ENCODE measurements at regions of chr12 and their contacts with region 1.

Region 1: DNA sequence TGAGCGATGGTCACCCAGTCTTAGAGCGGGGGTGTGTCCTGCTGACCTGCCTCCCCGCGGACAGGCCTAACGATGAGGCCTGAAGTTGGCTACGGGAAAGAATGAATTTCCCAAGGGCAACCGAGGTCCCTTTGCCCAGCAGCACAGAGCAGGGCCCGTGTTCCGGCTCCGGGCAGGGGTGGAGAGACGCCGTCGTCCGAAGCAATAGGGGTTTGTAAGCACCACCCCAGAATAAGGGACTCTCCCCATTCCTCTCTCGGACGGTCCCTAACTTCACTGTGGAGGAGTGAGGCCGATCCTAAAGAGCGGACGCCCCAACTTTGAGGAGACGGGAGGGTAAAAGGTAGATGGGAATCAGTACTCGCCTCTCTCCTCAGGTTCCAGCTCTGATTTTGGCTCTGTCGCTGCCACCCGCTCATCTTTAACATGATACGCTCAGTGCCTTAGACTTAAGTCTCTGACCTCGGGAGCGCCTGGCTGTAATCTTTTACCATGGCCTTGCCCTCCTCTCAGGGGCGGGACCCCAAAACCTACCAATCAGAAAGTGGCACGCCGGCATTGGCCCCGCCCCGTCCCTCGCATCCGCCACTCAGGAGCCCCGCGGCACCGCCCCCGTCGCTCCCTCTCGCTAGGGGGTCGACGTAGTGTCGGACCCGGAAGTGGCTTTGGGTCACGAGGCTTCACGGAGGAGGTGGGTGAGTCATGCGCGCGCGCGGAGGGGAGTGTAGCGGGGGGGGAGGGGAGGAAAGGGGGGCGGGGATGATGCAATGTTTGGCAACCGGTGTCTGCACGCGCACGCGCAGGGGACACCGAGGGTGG is at the start of gene DDIT3:
- DNase-seq: peak; percentile 99
- H3K4me3 ChIP-seq: peak within 1 kb of the TSS; percentile 75 to 99
- H3K4me3 Mint-ChIP-seq: peak within 1 kb of the TSS; percentile 93 to 99 (median 97)
- H3K27ac ChIP-seq: peak within 1 kb of the TSS; percentile 96
- H3K27ac Mint-ChIP-seq: peak within 1 kb of the TSS; percentile 99 to 100 (median 99)
- H3K4me1 ChIP-seq: peaks cover 65% of the 10 kb centered on the region
- H3K4me1 Mint-ChIP-seq: peaks cover 37 to 71% (median 49%) of the 10 kb centered on the region in 4 donors
- H3K27me3 ChIP-seq: no peaks in the 10 kb centered on the region
- H3K27me3 Mint-ChIP-seq: peaks cover 0 to 2% of the 10 kb centered on the region in 2 donors
- total RNA-seq, gene DDIT3: 38.5 to 40.8 TPM

Region 2: GRCh38 chr12:57487597-57488401 is 32.5 kb before region 1 on chr12 and contains the start of gene MARS1:
- CTCF ChIA-PET with region 1: interaction called, 5 read pairs
- POLR2A ChIA-PET with region 1: interaction called, 13 read pairs
- intact Hi-C with region 1: loop called (anchors 1 kb)
- DNase-seq: peak; percentile 90 to 97 (median 94)
- H3K4me3 ChIP-seq: peak within 1 kb of the TSS; percentile 78 to 95
- H3K4me3 Mint-ChIP-seq: peak within 1 kb of the TSS; percentile 95 to 99 (median 98)
- H3K27ac ChIP-seq: peak within 1 kb of the TSS; percentile 84
- H3K27ac Mint-ChIP-seq: peak within 1 kb of the TSS; percentile 90 to 99 (median 98)
- H3K4me1 ChIP-seq: peaks cover 23% of the 10 kb centered on the region
- H3K4me1 Mint-ChIP-seq: peaks cover 22 to 43% (median 28%) of the 10 kb centered on the region in 4 donors
- H3K27me3 ChIP-seq: no peaks in the 10 kb centered on the region
- H3K27me3 Mint-ChIP-seq: no peaks in the 10 kb centered on the region
- total RNA-seq, gene MARS1: 224 to 242 TPM

Region 3: DNA sequence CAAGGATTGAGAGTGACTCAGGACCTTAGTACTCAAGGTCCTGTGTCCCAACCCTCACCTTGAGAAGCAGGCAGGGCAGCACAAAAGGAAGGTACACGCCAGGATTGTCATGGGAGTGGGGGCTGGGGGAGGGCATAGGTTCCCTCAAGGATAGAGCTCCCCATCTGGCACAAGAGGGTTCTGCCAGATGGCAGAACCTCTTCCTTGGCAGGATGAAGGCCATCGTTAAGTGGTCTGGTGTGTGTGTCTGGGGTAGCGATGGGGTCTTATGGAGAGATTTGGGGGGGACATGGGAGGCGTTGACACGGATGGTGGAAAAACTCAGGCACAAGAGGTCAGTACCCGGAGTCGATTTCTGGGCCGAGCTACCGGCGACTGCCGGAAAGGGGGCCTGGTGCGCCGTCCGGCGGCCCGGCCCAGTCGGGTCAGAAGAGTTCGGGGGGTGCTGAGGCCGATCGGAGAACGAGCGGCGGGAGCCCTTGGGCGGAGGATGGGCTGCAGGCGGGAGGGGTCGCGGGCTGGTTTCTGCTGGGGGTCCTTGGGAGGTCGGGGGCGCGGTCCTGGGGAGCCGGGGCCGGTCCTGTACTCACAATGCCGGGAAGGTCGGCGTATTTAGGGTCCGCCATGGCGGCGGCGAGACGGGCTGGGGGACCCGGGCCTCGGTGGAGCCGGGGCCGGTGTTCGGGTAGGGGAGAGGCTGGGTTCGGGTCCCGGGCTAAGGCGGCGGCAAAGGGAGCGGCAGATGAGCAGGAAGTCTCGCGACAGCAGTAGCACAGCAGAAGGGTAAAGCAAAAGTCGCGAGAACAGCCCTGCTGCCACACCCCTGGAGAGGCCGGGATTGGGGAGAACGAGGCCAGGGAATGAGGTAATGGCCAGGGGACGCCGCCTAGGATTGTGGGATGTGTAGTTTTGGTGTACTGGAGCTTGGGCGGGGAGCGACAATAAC is 26.4 kb after region 1 on chr12 and contains the start of gene DCTN2:
- CTCF ChIA-PET with region 1: interaction called, 3 read pairs
- POLR2A ChIA-PET with region 1: interaction called, 20 read pairs
- intact Hi-C with region 1: loop called (anchors 1 kb)
- DNase-seq: peak; percentile 91 to 97 (median 93)
- H3K4me3 ChIP-seq: peak within 1 kb of the TSS; percentile 54 to 71
- H3K4me3 Mint-ChIP-seq: peak within 1 kb of the TSS; percentile 93 to 100 (median 98)
- H3K27ac ChIP-seq: peak within 1 kb of the TSS; percentile 84
- H3K27ac Mint-ChIP-seq: peak within 1 kb of the TSS; percentile 84 to 99 (median 97)
- H3K4me1 ChIP-seq: peaks cover 37% of the 10 kb centered on the region
- H3K4me1 Mint-ChIP-seq: peaks cover 32 to 53% (median 42%) of the 10 kb centered on the region in 4 donors
- H3K27me3 ChIP-seq: no peaks in the 10 kb centered on the region
- H3K27me3 Mint-ChIP-seq: peaks cover 2 to 4% of the 10 kb centered on the region in 2 donors
- total RNA-seq, gene DCTN2: 69.4 to 70.7 TPM

Region 4: DNA sequence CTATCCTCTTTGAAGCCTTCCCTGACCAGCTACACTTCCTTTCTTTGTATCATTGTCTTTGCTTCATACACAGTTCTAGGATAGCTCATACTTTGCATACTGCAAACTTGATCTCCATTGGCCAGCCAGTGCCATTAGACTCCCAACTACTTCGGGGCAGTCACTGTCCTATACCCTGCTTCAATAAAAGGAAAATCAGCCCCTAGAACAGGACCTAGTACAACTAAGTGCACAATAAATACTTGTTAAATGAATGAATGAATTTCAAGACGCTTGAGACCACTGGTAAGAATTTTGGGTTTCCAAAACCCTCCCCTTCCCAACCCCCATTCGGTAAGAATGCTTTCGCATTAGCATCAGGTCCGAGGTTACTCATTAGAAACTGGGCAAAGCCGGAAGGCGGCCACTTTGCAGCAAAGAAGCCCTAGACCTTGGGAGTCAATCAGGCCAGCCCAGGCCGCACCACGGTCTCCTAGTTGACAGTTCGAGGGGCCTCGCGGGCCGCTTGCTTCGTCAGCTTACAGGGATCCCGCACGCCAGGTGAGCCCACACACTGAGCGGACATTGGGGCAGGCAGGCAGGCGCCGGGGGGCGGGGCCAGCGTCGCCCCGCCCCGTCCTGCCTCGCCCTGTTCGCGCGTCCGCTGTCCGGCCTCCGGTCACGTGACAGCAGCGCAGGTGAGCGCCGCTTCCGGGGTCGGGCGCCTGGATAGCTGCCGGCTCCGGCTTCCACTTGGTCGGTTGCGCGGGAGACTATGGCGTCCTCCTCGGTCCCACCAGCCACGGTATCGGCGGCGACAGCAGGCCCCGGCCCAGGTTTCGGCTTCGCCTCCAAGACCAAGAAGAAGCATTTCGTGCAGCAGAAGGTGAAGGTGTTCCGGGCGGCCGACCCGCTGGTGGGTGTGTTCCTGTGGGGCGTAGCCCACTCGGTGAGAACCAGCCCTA is 70.5 kb after region 1 on chr12 and contains the start of gene PIP4K2C:
- CTCF ChIA-PET with region 1: no interaction called
- POLR2A ChIA-PET with region 1: interaction called, 4 read pairs
- intact Hi-C with region 1: loop called (anchors 1 kb)
- DNase-seq: peak; percentile 73 to 83 (median 75)
- H3K4me3 ChIP-seq: peak within 1 kb of the TSS; percentile 54 to 87
- H3K4me3 Mint-ChIP-seq: peak within 1 kb of the TSS; percentile 86 to 92 (median 90)
- H3K27ac ChIP-seq: peak within 1 kb of the TSS; percentile 63
- H3K27ac Mint-ChIP-seq: peak within 1 kb of the TSS; percentile 73 to 96 (median 91)
- H3K4me1 ChIP-seq: peaks cover 27% of the 10 kb centered on the region
- H3K4me1 Mint-ChIP-seq: peaks cover 23 to 39% (median 30%) of the 10 kb centered on the region in 4 donors
- H3K27me3 ChIP-seq: no peaks in the 10 kb centered on the region
- H3K27me3 Mint-ChIP-seq: no peaks in the 10 kb centered on the region
- total RNA-seq, gene PIP4K2C: 32.4 to 36.0 TPM

Region 5: DNA sequence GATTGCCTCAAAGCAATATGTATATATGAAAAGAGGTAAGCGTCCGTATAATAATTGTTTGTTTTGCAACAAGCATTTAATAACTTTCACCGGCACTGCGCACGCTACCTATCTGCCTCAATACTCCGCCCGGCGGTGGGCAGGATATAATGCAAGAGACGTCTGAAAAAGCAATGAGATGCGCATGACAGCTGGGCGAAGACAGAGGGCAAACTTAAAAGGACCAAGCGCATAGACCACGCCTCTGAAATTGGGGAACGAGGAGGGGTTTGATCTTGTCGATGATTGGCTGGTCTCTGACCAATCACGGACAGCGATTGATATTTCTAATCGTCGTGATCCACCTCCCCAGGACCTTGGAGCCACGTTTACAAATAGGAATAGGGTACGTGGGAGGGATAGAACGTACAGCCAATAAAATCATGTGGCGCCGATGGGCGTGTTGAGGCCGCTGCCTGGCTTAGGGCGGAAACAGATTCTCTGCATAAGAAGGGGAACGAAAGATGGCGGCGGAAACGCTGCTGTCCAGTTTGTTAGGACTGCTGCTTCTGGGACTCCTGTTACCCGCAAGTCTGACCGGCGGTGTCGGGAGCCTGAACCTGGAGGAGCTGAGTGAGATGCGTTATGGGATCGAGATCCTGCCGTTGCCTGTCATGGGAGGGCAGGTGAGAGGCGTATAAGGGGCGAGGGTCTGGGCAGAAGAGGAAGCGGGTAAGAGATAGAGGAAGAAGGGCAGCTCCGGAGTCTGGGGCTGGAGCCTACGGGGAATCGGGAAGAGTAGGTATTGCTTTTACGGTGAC is 173.6 kb after region 1 on chr12 and contains the start of gene OS9:
- CTCF ChIA-PET with region 1: no interaction called
- POLR2A ChIA-PET with region 1: no interaction called
- intact Hi-C with region 1: loop called (anchors 2 kb)
- DNase-seq: peak; percentile 93 to 100 (median 99)
- H3K4me3 ChIP-seq: peak within 1 kb of the TSS; percentile 75 to 82
- H3K4me3 Mint-ChIP-seq: no peak within 1 kb of the TSS
- H3K27ac ChIP-seq: peak within 1 kb of the TSS; percentile 79
- H3K27ac Mint-ChIP-seq: no peak within 1 kb of the TSS
- H3K4me1 ChIP-seq: peaks cover 26% of the 10 kb centered on the region
- H3K4me1 Mint-ChIP-seq: peaks cover 0 to 18% (median 5%) of the 10 kb centered on the region in 4 donors
- H3K27me3 ChIP-seq: no peaks in the 10 kb centered on the region
- H3K27me3 Mint-ChIP-seq: peaks cover 4 to 6% of the 10 kb centered on the region in 2 donors
- total RNA-seq, gene OS9: 189 to 195 TPM

Measured in CD4-positive, alpha-beta memory T cell (primary cell).